ENCODE measurements at regions of chr4 and their contacts with region 1.

Region 1: GRCh38 chr4:46389301-46389775 is 590 bp downstream of the GABRA2 start:
- DNase-seq: peak; percentile 45
- H3K4me3 Mint-ChIP-seq: peak overlapping the region; percentile 95
- H3K27ac Mint-ChIP-seq: no peak overlapping the region
- H3K4me1 Mint-ChIP-seq: peaks cover 19% of the 10 kb centered on the region
- H3K27me3 Mint-ChIP-seq: peaks cover 12% of the 10 kb centered on the region
- CTCF ChIP-seq: no peak

Region 2: DNA sequence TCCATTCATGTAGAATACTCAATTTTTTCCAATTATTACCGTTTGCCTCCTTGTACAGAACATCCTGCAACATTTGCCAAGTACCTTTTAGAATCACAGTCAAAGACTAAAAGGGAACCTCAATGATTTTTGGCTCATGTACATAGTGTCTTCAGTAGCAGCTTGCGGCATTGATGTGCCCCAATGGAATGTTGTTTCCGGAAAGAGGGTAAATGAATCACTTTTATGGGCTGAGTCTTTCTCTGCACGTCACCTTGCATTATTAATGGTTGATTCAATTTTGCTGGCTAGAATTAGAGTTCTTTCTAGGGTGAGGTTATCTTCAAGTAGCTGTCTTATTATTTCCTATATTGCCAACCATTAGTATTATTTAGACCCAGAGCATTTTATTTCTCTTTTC is 117.5 kb after region 1 on chr4:
- CTCF ChIA-PET with region 1: no interaction called
- POLR2A ChIA-PET with region 1: no interaction called
- intact Hi-C with region 1: loop called (anchors 5 kb)
- DNase-seq: peak; percentile 86
- H3K4me3 Mint-ChIP-seq: no peak overlapping the region
- H3K27ac Mint-ChIP-seq: no peak overlapping the region
- H3K4me1 Mint-ChIP-seq: peaks cover 33% of the 10 kb centered on the region
- H3K27me3 Mint-ChIP-seq: no peaks in the 10 kb centered on the region
- CTCF ChIP-seq: no peak

Region 3: GRCh38 chr4:46554760-46555465 is 165.6 kb after region 1 on chr4:
- CTCF ChIA-PET with region 1: no interaction called
- POLR2A ChIA-PET with region 1: no interaction called
- intact Hi-C with region 1: loop called (anchors 5 kb)
- DNase-seq: no peak
- H3K4me3 Mint-ChIP-seq: no peak overlapping the region
- H3K27ac Mint-ChIP-seq: no peak overlapping the region
- H3K4me1 Mint-ChIP-seq: no peaks in the 10 kb centered on the region
- H3K27me3 Mint-ChIP-seq: no peaks in the 10 kb centered on the region
- CTCF ChIP-seq: no peak

Region 4: GRCh38 chr4:46648088-46648744 is 258.9 kb after region 1 on chr4:
- CTCF ChIA-PET with region 1: interaction called, 7 read pairs
- POLR2A ChIA-PET with region 1: no interaction called
- intact Hi-C with region 1: loop called (anchors 1 kb)
- DNase-seq: peak; percentile 81
- H3K4me3 Mint-ChIP-seq: no peak overlapping the region
- H3K27ac Mint-ChIP-seq: no peak overlapping the region
- H3K4me1 Mint-ChIP-seq: no peaks in the 10 kb centered on the region
- H3K27me3 Mint-ChIP-seq: no peaks in the 10 kb centered on the region
- CTCF ChIP-seq: peak; percentile 60

Region 5: DNA sequence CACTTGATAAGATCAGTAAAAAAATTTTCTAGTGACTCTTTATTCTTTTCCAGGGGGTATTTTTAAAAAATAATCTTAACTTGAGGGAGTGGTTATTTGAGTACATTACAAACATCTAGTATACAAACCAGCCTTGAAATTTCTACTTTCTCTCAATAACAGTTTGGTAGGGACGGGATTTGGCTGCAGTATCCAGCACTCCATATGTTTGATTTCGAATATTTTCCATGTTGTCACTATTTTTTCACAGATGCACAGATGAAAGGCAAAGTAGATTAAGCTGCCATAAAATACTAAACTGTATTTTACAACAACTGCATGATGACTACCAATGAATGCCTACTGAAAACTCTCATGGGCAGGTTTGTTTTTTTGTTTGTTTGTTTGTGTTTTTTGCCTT is 294.7 kb after region 1 on chr4:
- CTCF ChIA-PET with region 1: no interaction called
- POLR2A ChIA-PET with region 1: no interaction called
- intact Hi-C with region 1: no loop called
- DNase-seq: no peak
- H3K4me3 Mint-ChIP-seq: no peak overlapping the region
- H3K27ac Mint-ChIP-seq: no peak overlapping the region
- H3K4me1 Mint-ChIP-seq: no peaks in the 10 kb centered on the region
- H3K27me3 Mint-ChIP-seq: no peaks in the 10 kb centered on the region
- CTCF ChIP-seq: no peak

Measured in MCF 10A (cell line).